ENCODE measurements at regions of chr14 and their contacts with region 1.

Region 1: GRCh38 chr14:94180655-94181271 is 6.6 kb downstream of the PPP4R4 start:
- DNase-seq: peak; percentile 18 to 48
- ATAC-seq: peak; percentile 62 to 75; a peak in 4 of 6 replicates
- H3K4me3 ChIP-seq: no peak overlapping the region
- H3K27ac ChIP-seq: no peak overlapping the region
- H3K4me1 ChIP-seq: no peaks in the 10 kb centered on the region
- CTCF ChIP-seq: peak; percentile 73
- EP300 ChIP-seq: no peak
- POLR2A ChIP-seq: no peak
- RAD21 ChIP-seq: peak; percentile 63 to 70

Region 2: DNA sequence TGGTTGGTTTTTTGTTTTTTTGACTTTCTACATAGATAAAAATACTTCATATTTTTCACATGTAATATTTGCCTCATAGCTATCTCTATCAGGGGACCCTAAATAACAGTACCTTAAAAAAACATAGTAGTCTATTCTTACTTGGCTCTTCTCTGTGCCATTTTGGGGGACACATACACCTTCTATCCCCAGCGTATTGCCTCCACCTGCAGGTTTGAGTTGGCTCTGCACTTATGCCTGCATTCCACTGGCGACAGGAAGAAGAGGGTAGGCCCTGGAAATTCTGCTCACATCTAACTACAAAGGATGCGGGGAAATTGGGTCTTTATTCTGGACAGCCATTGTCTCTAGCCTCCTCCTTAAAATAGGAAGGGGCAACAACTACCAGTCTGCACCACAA is 37.5 kb before region 1 on chr14:
- CTCF ChIA-PET with region 1: interaction called, 11 read pairs
- POLR2A ChIA-PET with region 1: no interaction called
- DNase-seq: no peak
- ATAC-seq: peak; percentile 43 to 74; a peak in 4 of 6 replicates
- H3K4me3 ChIP-seq: no peak overlapping the region
- H3K27ac ChIP-seq: no peak overlapping the region
- H3K4me1 ChIP-seq: no peaks in the 10 kb centered on the region
- CTCF ChIP-seq: no peak
- EP300 ChIP-seq: no peak
- POLR2A ChIP-seq: no peak
- RAD21 ChIP-seq: peak in 1 of 2 experiments; percentile 21; a peak in 1 of 5 replicates

Region 3: GRCh38 chr14:94203473-94204210 is 22.9 kb after region 1 on chr14:
- CTCF ChIA-PET with region 1: no interaction called
- POLR2A ChIA-PET with region 1: no interaction called
- DNase-seq: no peak
- ATAC-seq: no peak
- H3K4me3 ChIP-seq: no peak overlapping the region
- H3K27ac ChIP-seq: no peak overlapping the region
- H3K4me1 ChIP-seq: no peaks in the 10 kb centered on the region
- CTCF ChIP-seq: no peak
- EP300 ChIP-seq: no peak
- POLR2A ChIP-seq: no peak
- RAD21 ChIP-seq: no peak

Measured in A549 (cell line).